H1 (cell line): ENCODE measurements at regions of chr1 and their contacts with region 1.

Region 1: DNA sequence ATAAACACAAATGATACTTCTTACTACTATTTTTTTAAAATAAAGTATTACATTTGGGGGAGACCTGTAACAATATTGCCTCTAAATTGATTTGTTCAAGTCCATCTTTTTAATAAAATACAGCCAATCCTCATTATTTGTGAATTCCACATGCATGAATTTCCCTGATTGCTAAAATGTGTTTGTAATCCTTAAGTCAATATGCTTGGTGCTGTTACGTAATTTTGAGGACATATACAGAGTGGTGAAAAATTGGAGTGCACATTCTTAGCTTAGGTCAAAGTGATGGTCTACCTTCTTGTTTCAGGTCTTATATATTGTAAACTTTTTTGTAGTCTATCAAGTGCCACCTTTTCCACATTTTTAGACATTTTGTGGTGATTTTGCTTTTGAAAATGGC is 272.7 kb downstream of the SPATA17 start:
- DNase-seq: no peak
- H3K4me3 ChIP-seq: no peak overlapping the region
- H3K27ac ChIP-seq: no peak overlapping the region
- H3K4me1 ChIP-seq: peaks cover 0 to 8% (median 1%) of the 10 kb centered on the region in 4 experiments; a peak in 3 of 7 replicates
- H3K27me3 ChIP-seq: no peaks in the 10 kb centered on the region
- CTCF ChIP-seq: no peak
- EP300 ChIP-seq: no peak
- POLR2A ChIP-seq: no peak
- RAD21 ChIP-seq: no peak

Region 2: GRCh38 chr1:217876896-217877295 is 27.0 kb before region 1 on chr1:
- CTCF ChIA-PET with region 1: no interaction called
- POLR2A ChIA-PET with region 1: no interaction called
- DNase-seq: no peak
- H3K4me3 ChIP-seq: no peak overlapping the region
- H3K27ac ChIP-seq: no peak overlapping the region
- H3K4me1 ChIP-seq: no peaks in the 10 kb centered on the region
- H3K27me3 ChIP-seq: no peaks in the 10 kb centered on the region
- CTCF ChIP-seq: no peak
- EP300 ChIP-seq: no peak
- POLR2A ChIP-seq: no peak
- RAD21 ChIP-seq: no peak

Region 3: GRCh38 chr1:217889401-217889800 is 14.5 kb before region 1 on chr1:
- CTCF ChIA-PET with region 1: interaction called, 17 read pairs
- POLR2A ChIA-PET with region 1: no interaction called
- DNase-seq: peak; percentile 47 to 86
- H3K4me3 ChIP-seq: no peak overlapping the region
- H3K27ac ChIP-seq: no peak overlapping the region
- H3K4me1 ChIP-seq: no peaks in the 10 kb centered on the region
- H3K27me3 ChIP-seq: no peaks in the 10 kb centered on the region
- CTCF ChIP-seq: peak; percentile 75 to 89 (median 87)
- EP300 ChIP-seq: no peak
- POLR2A ChIP-seq: no peak
- RAD21 ChIP-seq: peak; percentile 97